GM12878 (cell line): ENCODE measurements at regions of chr13 and their contacts with region 1.

Region 1: GRCh38 chr13:75934889-75935288 is 298.8 kb downstream of the LMO7 start:
- DNase-seq: no peak
- ATAC-seq: no peak
- H3K4me3 ChIP-seq: no peak overlapping the region
- H3K27ac ChIP-seq: no peak overlapping the region
- H3K4me1 ChIP-seq: no peaks in the 10 kb centered on the region
- H3K27me3 ChIP-seq: no peaks in the 10 kb centered on the region
- CTCF ChIP-seq: no peak
- EP300 ChIP-seq: no peak
- POLR2A ChIP-seq: no peak
- RAD21 ChIP-seq: no peak

Region 2: DNA sequence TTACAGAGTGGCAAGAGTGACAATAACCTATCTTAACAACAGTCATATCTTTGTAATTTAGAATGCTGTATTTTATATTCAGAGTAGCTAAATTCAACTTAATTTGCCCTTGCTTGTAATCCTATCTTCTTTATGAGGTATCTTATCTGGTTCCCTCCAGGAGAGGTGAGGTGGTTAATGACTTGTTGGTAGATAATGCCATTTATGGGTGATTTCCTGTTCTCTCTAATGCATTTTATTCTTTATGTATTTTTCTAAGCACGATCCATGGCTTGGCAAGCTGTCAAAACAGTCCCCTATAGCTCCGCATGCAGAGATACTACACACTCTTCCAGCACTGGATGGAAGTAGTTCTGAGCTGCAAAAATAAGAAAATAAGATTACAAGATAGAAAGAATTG is 30.9 kb before region 1 on chr13:
- CTCF ChIA-PET with region 1: no interaction called
- POLR2A ChIA-PET with region 1: no interaction called
- RAD21 ChIA-PET with region 1: no interaction called
- SMC1A ChIA-PET with region 1: no interaction called
- in situ Hi-C with region 1: no loop called
- intact Hi-C with region 1: loop called (anchors 2 kb)
- DNase-seq: no peak
- ATAC-seq: no peak
- H3K4me3 ChIP-seq: no peak overlapping the region
- H3K27ac ChIP-seq: no peak overlapping the region
- H3K4me1 ChIP-seq: no peaks in the 10 kb centered on the region
- H3K27me3 ChIP-seq: peaks cover 0 to 2% of the 10 kb centered on the region in 2 experiments; a peak in 3 of 4 replicates
- CTCF ChIP-seq: no peak
- EP300 ChIP-seq: no peak
- POLR2A ChIP-seq: no peak
- RAD21 ChIP-seq: no peak